Vagina (tissue), 2 donors: ENCODE measurements at regions of chr6 and their contacts with region 1.

Region 1: GRCh38 chr6:41367700-41368099 is 32.3 kb downstream of the NCR2 start:
- DNase-seq: peak in 1 of 2 donors; percentile 62
- H3K4me3 ChIP-seq: no peak overlapping the region
- H3K27ac ChIP-seq: no peak overlapping the region
- H3K4me1 ChIP-seq: peaks cover 24% of the 10 kb centered on the region
- H3K27me3 ChIP-seq: no peaks in the 10 kb centered on the region
- CTCF ChIP-seq: peak in 1 of 3 experiments; percentile 49
- POLR2A ChIP-seq: no peak

Region 2: GRCh38 chr6:41449399-41450245 is 81.9 kb after region 1 on chr6:
- intact Hi-C with region 1: loop called (anchors 10 kb)
- DNase-seq: no peak
- H3K4me3 ChIP-seq: no peak overlapping the region
- H3K27ac ChIP-seq: no peak overlapping the region
- H3K4me1 ChIP-seq: peaks cover 23% of the 10 kb centered on the region
- H3K27me3 ChIP-seq: no peaks in the 10 kb centered on the region
- CTCF ChIP-seq: no peak
- POLR2A ChIP-seq: no peak

Region 3: GRCh38 chr6:41683510-41684310 is 316.0 kb after region 1 on chr6:
- intact Hi-C with region 1: loop called (anchors 2 kb)
- DNase-seq: no peak
- H3K4me3 ChIP-seq: peak overlapping the region; percentile 47 to 58
- H3K27ac ChIP-seq: peak overlapping the region; percentile 72
- H3K4me1 ChIP-seq: peaks cover 20% of the 10 kb centered on the region
- H3K27me3 ChIP-seq: no peaks in the 10 kb centered on the region
- CTCF ChIP-seq: peak; percentile 87 to 97 (median 93)
- POLR2A ChIP-seq: no peak